ENCODE measurements at regions of chr1 and their contacts with region 1.

Region 1: DNA sequence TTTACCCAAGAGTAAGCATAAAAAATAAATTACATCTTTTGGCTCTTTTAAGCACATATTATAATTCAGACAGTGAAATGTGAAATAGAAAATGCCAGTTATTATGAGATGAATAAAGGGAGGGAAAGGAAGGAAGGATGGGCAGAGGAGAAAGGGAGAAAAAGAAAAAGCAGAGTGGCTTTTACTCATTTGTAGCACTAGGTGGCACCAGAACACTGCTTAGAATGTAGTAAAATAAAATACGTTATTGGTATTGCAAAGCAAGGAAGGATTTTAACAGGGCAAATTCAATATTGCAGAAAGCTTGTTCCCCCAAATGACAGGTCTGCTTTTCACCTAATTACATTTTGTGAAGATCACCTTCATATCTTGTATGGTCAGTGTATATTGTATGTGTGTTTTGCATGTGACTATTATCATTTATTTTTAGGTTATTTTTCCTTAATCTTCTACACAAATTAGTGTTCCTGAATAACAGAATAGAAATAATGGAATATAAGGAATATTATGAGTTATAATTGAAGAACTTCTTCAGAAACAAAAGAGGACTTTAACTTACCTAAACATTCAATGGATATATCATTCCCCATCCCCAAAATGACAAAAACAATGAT is 9.1 kb upstream of the PCNX2 start:
- DNase-seq: peak; percentile 74
- ATAC-seq: peak; percentile 71
- H3K4me3 ChIP-seq: no peak overlapping the region
- H3K27ac ChIP-seq: no peak overlapping the region
- H3K4me1 ChIP-seq: peaks cover 1% of the 10 kb centered on the region; the same call in 1 of the 2 replicates
- H3K27me3 ChIP-seq: no peaks in the 10 kb centered on the region
- CTCF ChIP-seq: peak; percentile 93

Region 2: DNA sequence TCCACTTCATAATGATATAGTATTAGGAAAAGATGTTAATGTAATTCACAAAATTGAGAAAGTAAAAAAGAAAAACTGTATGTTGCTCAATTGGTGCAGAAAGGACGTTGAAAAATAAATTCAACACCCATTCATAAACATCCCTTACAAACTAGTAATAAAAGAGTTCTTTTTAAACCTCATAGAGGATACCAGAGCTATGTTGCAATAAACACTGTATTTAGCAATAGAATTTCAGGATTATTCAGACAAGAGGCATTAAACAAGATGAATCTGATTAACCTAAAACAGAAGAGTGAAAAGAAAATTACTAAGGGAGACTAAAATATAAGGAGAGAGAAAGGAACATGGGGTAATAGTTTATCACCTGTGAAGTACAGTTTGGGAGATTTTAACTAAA is 199.4 kb before region 1 on chr1:
- CTCF ChIA-PET with region 1: no interaction called
- POLR2A ChIA-PET with region 1: no interaction called
- intact Hi-C with region 1: no loop called
- DNase-seq: no peak
- ATAC-seq: no peak
- H3K4me3 ChIP-seq: no peak overlapping the region
- H3K27ac ChIP-seq: no peak overlapping the region
- H3K4me1 ChIP-seq: peaks cover 25% of the 10 kb centered on the region
- H3K27me3 ChIP-seq: no peaks in the 10 kb centered on the region
- CTCF ChIP-seq: no peak

Region 3: GRCh38 chr1:233277637-233278606 is 26.7 kb before region 1 on chr1:
- CTCF ChIA-PET with region 1: no interaction called
- POLR2A ChIA-PET with region 1: no interaction called
- intact Hi-C with region 1: no loop called
- DNase-seq: no peak
- ATAC-seq: no peak
- H3K4me3 ChIP-seq: no peak overlapping the region
- H3K27ac ChIP-seq: no peak overlapping the region
- H3K4me1 ChIP-seq: no peaks in the 10 kb centered on the region
- H3K27me3 ChIP-seq: no peaks in the 10 kb centered on the region
- CTCF ChIP-seq: no peak

Region 4: DNA sequence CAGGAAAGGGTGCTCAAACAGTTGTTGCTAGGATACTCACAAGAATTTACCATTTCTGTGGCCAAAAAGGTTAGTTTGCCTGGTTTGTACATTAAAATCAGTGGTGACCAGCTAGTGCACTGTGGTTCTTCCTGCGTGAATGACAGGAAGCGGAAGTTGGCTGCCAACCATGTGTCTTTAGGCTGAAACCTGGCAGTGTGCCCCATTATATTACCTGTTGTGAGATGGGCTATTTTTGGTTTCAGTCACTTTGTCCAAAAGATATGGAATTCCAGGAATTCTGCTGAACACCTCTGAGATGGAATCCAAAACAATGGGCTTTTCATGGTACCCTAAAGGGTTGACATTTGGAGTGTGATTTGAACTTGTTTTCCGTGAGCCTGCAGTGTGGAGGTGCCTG is 36.5 kb after region 1 on chr1:
- CTCF ChIA-PET with region 1: no interaction called
- POLR2A ChIA-PET with region 1: no interaction called
- intact Hi-C with region 1: no loop called
- DNase-seq: peak; percentile 27
- ATAC-seq: no peak
- H3K4me3 ChIP-seq: no peak overlapping the region
- H3K27ac ChIP-seq: no peak overlapping the region
- H3K4me1 ChIP-seq: no peaks in the 10 kb centered on the region
- H3K27me3 ChIP-seq: no peaks in the 10 kb centered on the region
- CTCF ChIP-seq: no peak

Region 5: DNA sequence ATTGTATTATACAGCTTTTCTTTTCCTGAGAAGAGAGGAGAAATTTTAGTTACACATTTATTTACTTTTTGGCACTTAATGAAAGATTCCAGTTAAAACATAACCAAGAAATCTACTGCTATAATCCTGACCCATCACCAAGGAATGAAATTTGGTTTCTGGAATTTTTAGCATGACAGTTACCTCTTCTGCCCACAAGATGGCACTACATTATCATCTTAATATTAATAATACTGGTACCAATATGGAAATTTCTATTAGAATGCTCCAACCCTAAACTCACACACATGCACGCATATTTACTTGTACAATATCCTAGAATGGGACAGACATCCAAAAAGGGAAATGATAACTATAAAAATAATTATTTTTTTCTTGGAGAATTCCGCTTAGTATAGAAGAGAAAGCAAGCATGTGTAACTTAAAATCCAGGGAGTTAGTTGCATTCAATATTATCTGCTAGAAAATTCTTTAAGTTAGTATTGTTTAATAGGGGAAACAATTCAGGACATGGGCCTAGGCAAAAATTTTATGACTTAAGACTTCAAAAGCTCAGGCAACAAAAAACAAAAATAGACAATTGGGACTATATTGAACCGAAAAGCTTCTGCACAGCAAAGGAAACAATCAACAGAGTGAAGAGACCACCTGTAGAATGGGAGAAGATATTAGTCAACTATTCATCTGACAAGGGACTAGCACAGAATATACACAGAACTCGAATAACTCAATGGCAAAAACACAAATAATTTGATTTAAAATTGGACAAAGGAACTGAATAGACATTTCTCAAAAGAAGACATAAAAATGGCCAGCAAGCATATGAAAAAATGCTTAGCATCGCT is 60.3 kb after region 1 on chr1:
- CTCF ChIA-PET with region 1: no interaction called
- POLR2A ChIA-PET with region 1: no interaction called
- intact Hi-C with region 1: loop called (anchors 1 kb)
- DNase-seq: peak; percentile 65
- ATAC-seq: peak; percentile 31; the same call in 1 of the 2 replicates
- H3K4me3 ChIP-seq: no peak overlapping the region
- H3K27ac ChIP-seq: no peak overlapping the region
- H3K4me1 ChIP-seq: peaks cover 23% of the 10 kb centered on the region
- H3K27me3 ChIP-seq: no peaks in the 10 kb centered on the region
- CTCF ChIP-seq: peak; percentile 87

Measured in PC-3 (cell line).